ENCODE measurements at regions of chr2 and their contacts with region 1.

Region 1: DNA sequence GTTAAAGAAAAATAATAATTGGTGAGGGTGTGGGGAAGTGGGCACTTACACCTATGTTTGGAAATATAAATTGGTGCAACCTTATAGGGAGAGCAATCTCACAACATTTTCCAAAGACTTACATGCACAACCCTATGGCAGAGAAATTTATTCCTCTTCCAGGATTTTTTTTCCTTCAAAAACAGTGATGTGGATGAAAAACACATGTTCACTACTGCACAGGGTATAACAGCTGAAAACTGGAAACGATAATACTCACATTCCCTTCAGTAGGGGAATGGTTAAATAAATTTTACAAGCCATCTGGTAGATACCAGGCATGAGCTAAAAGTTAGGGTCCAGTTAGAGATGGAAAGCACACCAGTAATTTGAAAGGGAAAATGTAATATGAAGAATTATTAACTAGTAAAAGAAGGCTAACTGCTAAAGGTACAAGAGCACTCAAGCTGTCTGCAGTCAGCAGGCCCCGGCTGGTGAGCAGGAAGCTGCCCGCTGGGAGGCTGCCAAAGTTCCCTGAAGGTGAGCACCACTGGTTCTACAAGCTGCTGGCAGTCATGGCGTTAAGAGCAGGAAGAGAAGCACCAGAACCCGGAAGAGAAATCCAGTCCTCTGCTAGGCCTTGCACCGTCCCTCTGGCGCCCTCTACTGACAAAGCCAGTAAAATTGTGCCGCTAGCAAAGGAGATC is 28.4 kb upstream of the CASP8 start:
- DNase-seq: peak; percentile 96
- ATAC-seq: peak; percentile 58
- H3K4me3 Mint-ChIP-seq: peak overlapping the region; percentile 96
- H3K27ac Mint-ChIP-seq: peak overlapping the region; percentile 86
- H3K4me1 Mint-ChIP-seq: peaks cover 50% of the 10 kb centered on the region
- H3K27me3 Mint-ChIP-seq: no peaks in the 10 kb centered on the region

Region 2: GRCh38 chr2:200765139-200765951 is 466.6 kb before region 1 on chr2:
- CTCF ChIA-PET with region 1: no interaction called
- DNase-seq: peak; percentile 65
- ATAC-seq: peak; percentile 85
- H3K4me3 Mint-ChIP-seq: no peak overlapping the region
- H3K27ac Mint-ChIP-seq: peak overlapping the region; percentile 61
- H3K4me1 Mint-ChIP-seq: peaks cover 31% of the 10 kb centered on the region
- H3K27me3 Mint-ChIP-seq: peaks cover 6% of the 10 kb centered on the region

Region 3: GRCh38 chr2:200963124-200963917 is 268.6 kb before region 1 on chr2 and contains the start of gene ORC2:
- CTCF ChIA-PET with region 1: interaction called, 12 read pairs
- DNase-seq: peak; percentile 94
- ATAC-seq: peak; percentile 96
- H3K4me3 Mint-ChIP-seq: peak within 1 kb of the TSS; percentile 92
- H3K27ac Mint-ChIP-seq: peak within 1 kb of the TSS; percentile 96
- H3K4me1 Mint-ChIP-seq: peaks cover 65% of the 10 kb centered on the region
- H3K27me3 Mint-ChIP-seq: no peaks in the 10 kb centered on the region
- total RNA-seq, gene ORC2: 54.8 to 57.8 TPM

Region 4: GRCh38 chr2:201040867-201041628 is 190.9 kb before region 1 on chr2:
- CTCF ChIA-PET with region 1: no interaction called
- DNase-seq: no peak
- ATAC-seq: no peak
- H3K4me3 Mint-ChIP-seq: no peak overlapping the region
- H3K27ac Mint-ChIP-seq: no peak overlapping the region
- H3K4me1 Mint-ChIP-seq: no peaks in the 10 kb centered on the region
- H3K27me3 Mint-ChIP-seq: no peaks in the 10 kb centered on the region

Region 5: GRCh38 chr2:201057087-201057521 is 174.8 kb before region 1 on chr2:
- CTCF ChIA-PET with region 1: no interaction called
- DNase-seq: no peak
- ATAC-seq: no peak
- H3K4me3 Mint-ChIP-seq: no peak overlapping the region
- H3K27ac Mint-ChIP-seq: no peak overlapping the region
- H3K4me1 Mint-ChIP-seq: peaks cover 13% of the 10 kb centered on the region
- H3K27me3 Mint-ChIP-seq: no peaks in the 10 kb centered on the region

Region 6: GRCh38 chr2:201182650-201183364 is 49.1 kb before region 1 on chr2 and contains the start of gene CASP10:
- CTCF ChIA-PET with region 1: interaction called, 166 read pairs
- DNase-seq: peak; percentile 48
- ATAC-seq: peak; percentile 82
- H3K4me3 Mint-ChIP-seq: peak within 1 kb of the TSS; percentile 94
- H3K27ac Mint-ChIP-seq: peak within 1 kb of the TSS; percentile 88
- H3K4me1 Mint-ChIP-seq: peaks cover 55% of the 10 kb centered on the region
- H3K27me3 Mint-ChIP-seq: no peaks in the 10 kb centered on the region
- total RNA-seq, gene CASP10: 26.6 to 37.4 TPM

Region 7: GRCh38 chr2:201215963-201216362 is 16.0 kb before region 1 on chr2:
- CTCF ChIA-PET with region 1: interaction called, 17 read pairs
- DNase-seq: no peak
- ATAC-seq: no peak
- H3K4me3 Mint-ChIP-seq: no peak overlapping the region
- H3K27ac Mint-ChIP-seq: no peak overlapping the region
- H3K4me1 Mint-ChIP-seq: peaks cover 15% of the 10 kb centered on the region
- H3K27me3 Mint-ChIP-seq: no peaks in the 10 kb centered on the region

Region 8: GRCh38 chr2:201257956-201258665 is 26.2 kb after region 1 on chr2:
- CTCF ChIA-PET with region 1: interaction called, 70 read pairs
- DNase-seq: peak; percentile 98
- ATAC-seq: peak; percentile 65
- H3K4me3 Mint-ChIP-seq: peak overlapping the region; percentile 83
- H3K27ac Mint-ChIP-seq: peak overlapping the region; percentile 98
- H3K4me1 Mint-ChIP-seq: peaks cover 66% of the 10 kb centered on the region
- H3K27me3 Mint-ChIP-seq: no peaks in the 10 kb centered on the region

Region 9: DNA sequence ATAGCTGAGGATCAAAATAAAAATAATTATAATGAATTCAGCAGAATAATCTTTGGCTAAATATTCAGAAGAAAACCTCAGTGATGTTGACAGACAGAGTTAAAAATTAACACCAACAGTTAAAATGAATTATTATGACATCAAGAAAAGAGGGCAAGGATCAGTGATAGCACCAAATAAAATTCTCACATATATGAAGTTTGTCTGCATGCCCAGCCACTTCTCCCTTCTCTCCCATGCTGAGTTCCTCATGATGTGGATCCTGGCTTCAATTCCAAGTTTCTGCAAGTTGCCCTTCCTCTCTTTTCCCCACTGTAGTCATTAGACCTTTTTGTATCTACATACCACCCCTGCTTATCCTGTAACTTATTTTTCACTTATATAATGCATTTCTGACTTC is 226.5 kb after region 1 on chr2:
- CTCF ChIA-PET with region 1: no interaction called
- DNase-seq: no peak
- ATAC-seq: no peak
- H3K4me3 Mint-ChIP-seq: no peak overlapping the region
- H3K27ac Mint-ChIP-seq: no peak overlapping the region
- H3K4me1 Mint-ChIP-seq: no peaks in the 10 kb centered on the region
- H3K27me3 Mint-ChIP-seq: no peaks in the 10 kb centered on the region